Left ventricle myocardium superior (tissue), 1 donor: ENCODE measurements at regions of chr7 and their contacts with region 1.

Region 1: GRCh38 chr7:86939197-86939814 is 120.1 kb downstream of the ELAPOR2 start:
- DNase-seq: no peak
- ATAC-seq: peak; percentile 63

Region 2: GRCh38 chr7:87139514-87139913 is 200.2 kb after region 1 on chr7:
- intact Hi-C with region 1: loop called (anchors 5 kb)
- DNase-seq: no peak
- ATAC-seq: no peak

Region 3: DNA sequence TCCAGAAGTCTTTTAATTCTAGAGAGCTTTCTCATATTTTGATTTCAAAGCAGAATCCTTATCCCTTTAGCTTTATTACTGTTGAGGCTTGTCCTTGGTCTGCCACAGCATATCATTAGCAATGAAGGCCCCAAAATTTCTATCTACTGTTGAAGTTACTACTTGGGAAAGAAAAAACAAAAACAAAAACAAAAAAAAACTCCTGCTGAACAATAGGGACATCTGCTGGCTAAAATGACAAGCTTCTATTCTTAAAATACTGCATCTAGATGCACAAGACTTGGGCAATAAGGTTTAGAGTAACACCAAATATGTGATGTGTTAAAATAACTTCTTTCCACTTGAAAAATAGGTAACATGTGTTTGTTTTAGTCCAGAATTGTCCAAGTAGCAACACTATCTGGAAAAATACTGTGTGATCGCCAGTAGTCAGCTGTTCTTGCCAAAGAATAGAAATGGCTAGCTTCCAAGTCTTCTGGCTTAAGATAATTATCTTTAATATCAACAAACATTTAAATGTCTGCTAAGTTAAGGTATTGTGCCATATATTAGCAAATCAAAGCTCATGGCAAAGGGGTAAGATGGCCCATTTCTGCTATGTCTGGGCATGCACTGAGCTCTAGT is 209.1 kb after region 1 on chr7:
- intact Hi-C with region 1: loop called (anchors 1 kb)
- DNase-seq: no peak
- ATAC-seq: no peak